AG04449 (cell line): ENCODE measurements at regions of chr3 and their contacts with region 1.

Region 1: DNA sequence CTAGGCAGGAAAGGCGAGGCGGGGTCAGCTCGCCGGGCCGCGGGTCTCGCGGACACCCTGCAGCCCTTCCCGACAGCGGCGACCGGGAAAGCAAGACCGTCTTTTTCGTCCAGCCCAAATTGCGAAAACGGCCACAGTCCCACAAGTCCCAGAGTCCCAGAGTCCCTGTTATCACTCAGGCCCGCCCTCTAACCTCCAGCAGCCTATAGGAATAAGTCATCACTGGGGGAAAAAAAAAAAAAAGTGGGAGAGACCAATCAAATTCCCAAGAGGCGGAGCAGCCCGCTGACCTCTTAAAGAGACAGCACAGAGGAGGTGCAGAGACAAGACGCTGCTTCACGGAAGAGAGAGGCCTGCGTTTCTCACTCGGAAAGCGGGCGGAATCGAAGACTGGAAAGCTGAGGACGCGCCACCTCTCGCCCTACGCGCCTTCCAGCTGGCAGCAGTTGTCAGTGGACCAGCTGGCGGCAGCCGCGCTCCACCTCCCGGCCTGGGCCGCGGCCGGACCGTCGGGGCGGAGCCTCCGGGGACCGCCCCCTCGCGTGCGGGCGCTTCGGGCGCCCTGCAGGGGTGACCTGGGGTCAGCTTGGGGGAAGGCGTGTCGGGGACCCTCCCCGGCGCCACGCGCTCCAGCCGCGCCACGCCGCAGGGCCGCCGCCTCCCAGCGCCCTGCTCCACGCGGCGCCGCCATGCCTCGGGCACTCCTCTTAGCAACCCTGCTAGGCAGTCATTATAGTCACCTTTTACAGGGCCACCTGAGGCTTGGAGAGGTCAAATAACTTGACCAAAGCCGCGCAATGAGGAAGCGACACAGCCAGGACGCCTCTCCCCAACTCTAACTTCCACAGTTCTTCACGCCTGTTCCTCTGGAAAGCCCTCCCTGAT is at the start of gene TPRA1:
- DNase-seq: peak; percentile 84
- H3K4me3 ChIP-seq: peak within 1 kb of the TSS; percentile 85
- CTCF ChIP-seq: no peak

Region 2: GRCh38 chr3:127574880-127575878 is 15.7 kb before region 1 on chr3:
- CTCF ChIA-PET with region 1: interaction called, 80 read pairs
- POLR2A ChIA-PET with region 1: interaction called, 4 read pairs
- DNase-seq: no peak
- H3K4me3 ChIP-seq: no peak overlapping the region
- CTCF ChIP-seq: peak; percentile 95

Region 3: GRCh38 chr3:127610105-127610504 is 19.3 kb after region 1 on chr3:
- CTCF ChIA-PET with region 1: no interaction called
- POLR2A ChIA-PET with region 1: no interaction called
- DNase-seq: no peak
- H3K4me3 ChIP-seq: no peak overlapping the region
- CTCF ChIP-seq: no peak